ENCODE measurements at regions of chr6 and their contacts with region 1.

Region 1: GRCh38 chr6:151014404-151015100 is 149.1 kb downstream of the MTHFD1L start:
- DNase-seq: peak; percentile 71
- ATAC-seq: peak; percentile 43
- H3K4me3 ChIP-seq: no peak overlapping the region
- H3K27ac ChIP-seq: peak overlapping the region; percentile 88
- H3K4me1 ChIP-seq: peaks cover 20% of the 10 kb centered on the region
- H3K27me3 ChIP-seq: no peaks in the 10 kb centered on the region
- CTCF ChIP-seq: peak; percentile 77
- POLR2A ChIP-seq: no peak
- RAD21 ChIP-seq: peak; percentile 81

Region 2: DNA sequence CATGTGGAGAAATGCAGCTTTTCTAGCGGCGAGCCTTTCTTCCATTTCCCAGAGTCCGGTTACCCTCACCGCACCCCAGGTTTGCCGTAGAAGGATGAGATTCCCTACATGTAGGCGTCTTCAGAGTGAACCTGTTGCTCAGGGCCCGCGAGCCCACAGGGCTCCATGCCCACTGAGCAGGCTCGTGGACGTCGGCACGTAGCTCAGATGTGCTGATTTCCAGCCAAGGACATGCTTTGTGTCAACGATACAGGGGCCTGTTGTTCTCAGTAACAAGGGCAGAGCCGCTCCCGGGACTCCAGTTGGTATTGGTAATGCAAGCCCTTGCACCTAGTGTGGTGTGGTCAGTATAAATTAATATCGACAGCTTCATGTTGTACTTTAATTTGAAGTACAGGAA is 10.5 kb after region 1 on chr6:
- CTCF ChIA-PET with region 1: interaction called, 27 read pairs
- POLR2A ChIA-PET with region 1: no interaction called
- dilution Hi-C with region 1: no loop called
- in situ Hi-C with region 1: no loop called
- intact Hi-C with region 1: no loop called
- DNase-seq: no peak
- ATAC-seq: no peak
- H3K4me3 ChIP-seq: no peak overlapping the region
- H3K27ac ChIP-seq: no peak overlapping the region
- H3K4me1 ChIP-seq: peaks cover 9% of the 10 kb centered on the region
- H3K27me3 ChIP-seq: no peaks in the 10 kb centered on the region
- CTCF ChIP-seq: no peak
- POLR2A ChIP-seq: no peak
- RAD21 ChIP-seq: no peak

Region 3: DNA sequence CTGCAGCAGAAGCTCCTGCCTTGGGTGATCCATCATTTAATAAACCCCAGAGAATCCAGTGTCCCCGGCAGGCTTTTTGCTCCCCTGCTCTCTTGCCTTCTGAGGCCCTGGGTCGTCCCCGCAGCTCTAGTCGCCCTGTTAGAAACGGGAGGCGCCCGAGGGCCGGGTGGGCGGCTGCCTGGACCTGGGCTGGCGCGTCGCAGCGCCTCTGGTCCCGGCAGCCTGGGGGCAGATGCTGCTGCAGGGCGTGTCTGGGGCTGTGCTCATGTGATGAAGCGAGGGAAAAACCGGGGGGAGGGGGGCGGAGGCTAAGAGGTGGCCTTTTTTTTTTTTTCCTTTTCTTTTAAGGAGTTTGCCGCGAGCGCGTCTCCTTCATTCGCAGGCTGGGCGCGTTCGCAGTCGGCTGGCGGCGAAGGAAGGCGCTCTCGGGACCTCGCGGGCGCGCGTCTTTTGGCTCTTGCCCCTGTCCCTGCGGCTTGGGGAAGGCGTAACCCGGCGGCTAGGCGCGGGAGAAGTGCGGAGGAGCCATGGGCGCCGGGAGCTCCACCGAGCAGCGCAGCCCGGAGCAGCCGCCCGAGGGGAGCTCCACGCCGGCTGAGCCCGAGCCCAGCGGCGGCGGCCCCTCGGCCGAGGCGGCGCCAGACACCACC is 225.6 kb after region 1 on chr6:
- CTCF ChIA-PET with region 1: no interaction called
- POLR2A ChIA-PET with region 1: no interaction called
- dilution Hi-C with region 1: no loop called
- in situ Hi-C with region 1: no loop called
- intact Hi-C with region 1: loop called (anchors 10 kb)
- DNase-seq: peak; percentile 64
- ATAC-seq: peak; percentile 73
- H3K4me3 ChIP-seq: peak overlapping the region; percentile 69
- H3K27ac ChIP-seq: peak overlapping the region; percentile 68
- H3K4me1 ChIP-seq: no peaks in the 10 kb centered on the region
- H3K27me3 ChIP-seq: peaks cover 3% of the 10 kb centered on the region; the same call in 1 of the 2 replicates
- CTCF ChIP-seq: no peak
- POLR2A ChIP-seq: peak; percentile 74; the same call in 1 of the 2 replicates
- RAD21 ChIP-seq: no peak

Region 4: GRCh38 chr6:151330134-151330696 is 315.7 kb after region 1 on chr6:
- CTCF ChIA-PET with region 1: interaction called, 56 read pairs
- POLR2A ChIA-PET with region 1: no interaction called
- dilution Hi-C with region 1: no loop called
- in situ Hi-C with region 1: no loop called
- intact Hi-C with region 1: loop called (anchors 1 kb)
- DNase-seq: peak; percentile 88
- ATAC-seq: peak; percentile 66
- H3K4me3 ChIP-seq: no peak overlapping the region
- H3K27ac ChIP-seq: no peak overlapping the region
- H3K4me1 ChIP-seq: peaks cover 5% of the 10 kb centered on the region; the same call in 1 of the 2 replicates
- H3K27me3 ChIP-seq: no peaks in the 10 kb centered on the region
- CTCF ChIP-seq: no peak
- POLR2A ChIP-seq: no peak
- RAD21 ChIP-seq: no peak

Region 5: DNA sequence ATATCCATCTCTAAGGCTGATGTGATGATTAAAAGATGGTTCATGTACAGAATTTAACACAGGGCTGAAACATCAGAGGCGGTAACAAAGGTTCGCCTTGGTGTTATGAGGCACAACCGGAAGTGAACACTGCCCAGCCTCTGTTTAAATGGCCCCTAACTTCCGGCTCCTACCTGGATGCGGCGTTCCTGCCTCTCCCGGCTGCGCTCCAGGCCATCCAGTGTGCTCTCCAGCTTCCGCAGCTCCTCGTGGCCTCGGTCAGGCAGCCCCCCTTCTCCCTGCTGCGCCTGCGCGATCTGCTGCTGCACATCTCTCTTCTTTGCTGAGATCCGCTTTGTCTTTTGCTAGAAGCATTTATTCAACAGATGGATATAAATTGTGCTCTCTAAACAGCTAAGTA is 1427.3 kb after region 1 on chr6:
- CTCF ChIA-PET with region 1: no interaction called
- POLR2A ChIA-PET with region 1: no interaction called
- dilution Hi-C with region 1: no loop called
- in situ Hi-C with region 1: no loop called
- intact Hi-C with region 1: no loop called
- DNase-seq: no peak
- ATAC-seq: no peak
- H3K4me3 ChIP-seq: no peak overlapping the region
- H3K27ac ChIP-seq: no peak overlapping the region
- H3K4me1 ChIP-seq: no peaks in the 10 kb centered on the region
- H3K27me3 ChIP-seq: no peaks in the 10 kb centered on the region
- CTCF ChIP-seq: no peak
- POLR2A ChIP-seq: no peak
- RAD21 ChIP-seq: no peak

Region 6: GRCh38 chr6:152746172-152746553 is 1731.6 kb after region 1 on chr6:
- CTCF ChIA-PET with region 1: no interaction called
- POLR2A ChIA-PET with region 1: no interaction called
- dilution Hi-C with region 1: no loop called
- in situ Hi-C with region 1: no loop called
- intact Hi-C with region 1: no loop called
- DNase-seq: peak; percentile 59
- ATAC-seq: peak; percentile 74
- H3K4me3 ChIP-seq: no peak overlapping the region
- H3K27ac ChIP-seq: no peak overlapping the region
- H3K4me1 ChIP-seq: no peaks in the 10 kb centered on the region
- H3K27me3 ChIP-seq: no peaks in the 10 kb centered on the region
- CTCF ChIP-seq: no peak
- POLR2A ChIP-seq: no peak
- RAD21 ChIP-seq: no peak

Measured in IMR-90 (cell line).